ENCODE measurements at regions of chr1 and their contacts with region 1.

Region 1: GRCh38 chr1:21270086-21270689 is 20.1 kb downstream of the ECE1 start:
- DNase-seq: peak; percentile 39

Region 2: DNA sequence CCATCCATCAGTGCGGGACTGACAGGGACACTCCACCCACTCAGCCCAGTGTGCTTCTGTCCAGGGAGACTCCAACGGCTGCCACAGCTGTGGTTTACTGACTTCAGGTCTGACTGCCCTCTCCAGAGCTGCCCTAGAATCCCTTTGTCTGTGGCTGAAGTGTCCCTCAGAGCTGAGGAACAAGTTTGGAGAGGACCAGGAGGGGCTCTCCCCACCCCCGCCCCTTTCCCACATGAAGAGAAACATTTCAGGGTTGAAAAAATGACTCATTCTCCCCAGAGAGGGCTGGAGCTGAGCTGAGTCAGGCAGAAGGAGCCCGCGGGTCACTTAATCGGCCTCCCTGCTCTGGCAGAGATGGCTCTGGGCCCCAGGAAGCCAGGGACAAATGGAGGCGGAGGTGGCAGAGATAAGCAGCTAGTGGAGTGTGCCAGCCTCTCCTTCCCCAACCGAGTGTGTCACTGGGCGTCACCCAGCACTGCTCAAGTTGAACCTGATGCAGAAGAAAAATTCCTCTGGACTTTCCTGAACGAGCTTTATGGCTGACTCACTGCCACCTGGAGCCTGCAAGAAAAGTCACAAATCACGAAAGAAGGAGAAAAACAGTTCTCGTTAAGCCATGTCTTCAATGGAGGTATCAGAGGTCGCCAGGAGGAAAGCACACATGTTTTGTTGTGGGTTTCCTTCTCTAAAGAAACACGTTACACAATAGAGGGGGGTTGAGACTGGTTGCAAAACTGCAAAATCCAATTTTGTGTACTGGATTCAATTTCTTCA is 54.4 kb after region 1 on chr1:
- in situ Hi-C with region 1: loop called (anchors 5 kb)
- DNase-seq: no peak

Measured in G401 (cell line).